ENCODE measurements at regions of chr2 and their contacts with region 1.

Region 1: GRCh38 chr2:71995067-71995665 is 152.5 kb downstream of the CYP26B1 start:
- DNase-seq: no peak
- H3K4me3 ChIP-seq: no peak overlapping the region
- H3K27ac ChIP-seq: no peak overlapping the region
- H3K4me1 ChIP-seq: no peaks in the 10 kb centered on the region
- H3K27me3 ChIP-seq: peaks cover 8 to 24% of the 10 kb centered on the region in 2 experiments
- CTCF ChIP-seq: peak in 1 of 2 donors; percentile 11
- POLR2A ChIP-seq: no peak

Region 2: GRCh38 chr2:71545572-71546274 is 449.4 kb before region 1 on chr2:
- CTCF ChIA-PET with region 1: no interaction called
- POLR2A ChIA-PET with region 1: no interaction called
- dilution Hi-C with region 1: no loop called
- intact Hi-C with region 1: loop called (anchors 5 kb)
- DNase-seq: peak; percentile 74
- H3K4me3 ChIP-seq: peak overlapping the region in 1 of 3 experiments; percentile 7
- H3K27ac ChIP-seq: no peak overlapping the region
- H3K4me1 ChIP-seq: peaks cover 11% of the 10 kb centered on the region
- H3K27me3 ChIP-seq: no peaks in the 10 kb centered on the region
- CTCF ChIP-seq: peak; percentile 64 to 72
- POLR2A ChIP-seq: no peak

Region 3: DNA sequence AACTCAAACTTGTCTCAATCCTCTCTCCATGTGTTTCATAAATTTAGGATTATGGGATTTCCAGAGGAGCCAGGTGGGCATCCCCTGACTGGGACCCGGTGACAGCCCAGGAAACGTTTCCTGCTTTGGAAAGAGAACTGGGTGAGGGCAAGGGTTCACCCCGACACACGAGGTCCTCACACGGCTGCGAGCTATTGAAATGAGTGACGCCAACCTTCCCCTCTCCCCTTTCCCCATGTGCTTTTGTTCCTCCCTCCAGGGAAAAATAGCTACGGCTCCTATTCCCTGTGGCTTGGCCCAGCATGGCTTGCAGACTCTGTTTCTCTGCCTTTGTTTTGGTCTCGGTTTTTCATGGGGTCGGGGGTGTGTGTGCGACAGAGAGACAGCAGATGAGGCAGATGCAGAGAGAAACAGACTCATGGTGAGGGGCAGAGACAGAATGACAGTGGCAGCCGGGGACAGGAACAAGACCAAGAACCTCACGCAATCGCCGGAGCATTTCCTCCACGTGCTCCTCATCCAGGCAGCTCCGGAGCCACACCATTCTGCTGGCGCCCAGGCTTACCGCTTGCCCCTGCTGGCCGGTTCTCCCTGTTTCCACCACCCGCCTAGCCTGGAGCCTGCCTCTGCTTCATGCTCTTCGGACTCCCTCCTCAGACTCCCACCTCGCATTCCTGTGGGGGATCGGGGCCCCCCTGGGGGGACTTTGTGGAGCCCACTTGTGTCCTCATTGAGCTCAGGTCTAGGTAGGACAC is 303.2 kb before region 1 on chr2:
- CTCF ChIA-PET with region 1: no interaction called
- POLR2A ChIA-PET with region 1: no interaction called
- dilution Hi-C with region 1: no loop called
- intact Hi-C with region 1: no loop called
- DNase-seq: no peak
- H3K4me3 ChIP-seq: no peak overlapping the region
- H3K27ac ChIP-seq: no peak overlapping the region
- H3K4me1 ChIP-seq: no peaks in the 10 kb centered on the region
- H3K27me3 ChIP-seq: no peaks in the 10 kb centered on the region
- CTCF ChIP-seq: peak in 1 of 2 donors; percentile 25
- POLR2A ChIP-seq: no peak

Region 4: DNA sequence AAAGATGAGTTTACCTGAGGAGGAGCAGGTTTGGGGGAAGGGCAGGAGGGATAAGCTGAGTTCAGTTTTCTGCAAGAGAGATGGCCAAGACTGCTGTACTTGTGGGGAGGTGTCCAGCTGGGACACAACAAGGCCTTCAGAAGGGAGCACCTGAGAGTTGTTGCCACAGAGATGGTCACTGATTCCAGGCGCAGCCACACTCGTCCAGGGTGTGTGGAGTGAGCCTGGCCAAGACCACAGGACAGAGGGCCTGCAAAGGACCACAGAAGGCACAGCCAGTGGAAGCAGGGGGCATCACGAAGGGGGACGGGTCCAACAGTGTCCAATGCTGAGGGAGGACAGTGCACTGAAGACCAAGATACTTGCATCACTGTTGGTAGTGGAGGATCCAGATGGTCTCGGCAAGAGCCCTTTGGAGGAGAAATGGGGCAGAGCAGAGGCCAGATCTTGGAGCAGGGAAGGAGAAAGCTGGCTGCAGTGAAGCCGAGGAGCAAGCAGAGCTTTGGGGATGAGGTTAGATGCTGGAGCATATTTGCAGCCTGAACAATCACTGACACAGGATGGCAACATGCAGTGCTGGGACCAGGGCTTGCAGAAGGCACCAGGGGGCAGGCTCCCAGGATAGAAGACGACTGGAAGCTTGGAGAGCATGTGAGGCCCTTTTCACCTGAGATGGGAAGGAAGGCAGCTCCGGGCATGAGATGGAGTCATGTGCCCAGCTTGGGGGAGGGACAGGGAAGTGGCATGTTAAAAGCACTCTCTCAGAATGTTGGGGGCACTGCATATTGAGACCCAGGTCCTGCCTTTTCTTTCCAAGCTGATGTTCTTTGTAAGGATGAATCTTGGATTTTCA is 61.5 kb before region 1 on chr2:
- CTCF ChIA-PET with region 1: no interaction called
- POLR2A ChIA-PET with region 1: no interaction called
- dilution Hi-C with region 1: no loop called
- intact Hi-C with region 1: no loop called
- DNase-seq: no peak
- H3K4me3 ChIP-seq: no peak overlapping the region
- H3K27ac ChIP-seq: no peak overlapping the region
- H3K4me1 ChIP-seq: no peaks in the 10 kb centered on the region
- H3K27me3 ChIP-seq: peaks cover 0 to 2% of the 10 kb centered on the region in 2 experiments
- CTCF ChIP-seq: peak in 1 of 2 donors; percentile 21
- POLR2A ChIP-seq: no peak